ENCODE measurements at regions of chr17 and their contacts with region 1.

Region 1: DNA sequence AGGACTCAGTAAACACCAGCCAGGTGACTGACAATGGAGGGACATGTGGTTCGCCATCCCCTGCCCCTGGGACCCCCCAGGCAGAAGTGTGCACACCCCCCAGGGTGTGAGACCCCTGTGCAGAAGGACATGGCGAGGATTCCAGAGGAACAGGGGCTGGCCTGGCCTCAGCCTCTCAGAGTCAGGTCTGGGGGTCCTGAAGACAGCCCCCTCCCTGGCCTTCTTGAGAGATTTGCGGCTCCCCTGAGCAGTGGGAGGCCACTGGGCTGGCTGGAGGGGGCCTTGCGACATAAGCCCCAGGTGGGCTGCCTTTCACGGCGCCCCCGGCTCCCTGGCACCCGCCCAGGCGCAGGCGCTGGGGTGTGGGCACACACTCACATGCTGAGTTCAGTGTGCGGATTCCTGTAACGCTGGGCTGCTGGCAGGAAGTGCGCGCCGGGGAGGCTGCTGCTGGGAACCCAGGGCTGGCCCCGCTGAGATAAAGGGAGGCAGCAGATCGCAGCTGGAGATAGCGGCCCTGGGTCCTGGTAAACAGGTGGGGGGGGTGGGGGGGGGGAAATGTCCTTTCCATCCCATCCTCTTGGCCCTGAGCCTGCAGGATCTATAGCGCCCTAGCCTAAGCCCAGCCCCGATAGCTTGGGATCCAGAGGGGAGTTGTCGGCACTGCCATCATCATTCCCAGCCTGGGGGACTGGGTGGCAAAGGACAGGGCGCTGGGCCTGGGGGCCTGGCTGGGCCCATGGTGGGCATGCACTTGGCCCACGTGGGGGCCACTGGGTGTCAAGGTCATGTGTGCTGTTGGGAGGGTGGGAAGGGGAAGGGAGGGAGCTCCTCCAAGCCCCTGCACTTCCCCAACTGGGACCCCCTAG is 27.1 kb downstream of the TMEM235 start:
- DNase-seq: no peak
- ATAC-seq: no peak
- H3K4me3 Mint-ChIP-seq: peak overlapping the region; percentile 57
- H3K27ac Mint-ChIP-seq: peak overlapping the region; percentile 56
- H3K4me1 Mint-ChIP-seq: peaks cover 24% of the 10 kb centered on the region
- H3K27me3 Mint-ChIP-seq: no peaks in the 10 kb centered on the region
- CTCF ChIP-seq: no peak

Region 2: GRCh38 chr17:78276098-78276887 is 17.7 kb after region 1 on chr17:
- CTCF ChIA-PET with region 1: no interaction called
- POLR2A ChIA-PET with region 1: interaction called, 11 read pairs
- intact Hi-C with region 1: loop called (anchors 1 kb)
- DNase-seq: peak; percentile 30
- ATAC-seq: peak; percentile 78
- H3K4me3 Mint-ChIP-seq: peak overlapping the region; percentile 38
- H3K27ac Mint-ChIP-seq: peak overlapping the region; percentile 65
- H3K4me1 Mint-ChIP-seq: peaks cover 42% of the 10 kb centered on the region
- H3K27me3 Mint-ChIP-seq: peaks cover 12% of the 10 kb centered on the region
- CTCF ChIP-seq: no peak

Region 3: GRCh38 chr17:78390241-78391050 is 131.9 kb after region 1 on chr17:
- CTCF ChIA-PET with region 1: no interaction called
- POLR2A ChIA-PET with region 1: no interaction called
- intact Hi-C with region 1: no loop called
- DNase-seq: no peak
- ATAC-seq: no peak
- H3K4me3 Mint-ChIP-seq: no peak overlapping the region
- H3K27ac Mint-ChIP-seq: peak overlapping the region; percentile 46
- H3K4me1 Mint-ChIP-seq: peaks cover 71% of the 10 kb centered on the region
- H3K27me3 Mint-ChIP-seq: no peaks in the 10 kb centered on the region
- CTCF ChIP-seq: no peak